MCF 10A (cell line): ENCODE measurements at regions of chr5 and their contacts with region 1.

Region 1: GRCh38 chr5:139312075-139312474 is 18.5 kb downstream of the MATR3 start:
- DNase-seq: no peak
- H3K4me3 Mint-ChIP-seq: no peak overlapping the region
- H3K27ac Mint-ChIP-seq: peak overlapping the region; percentile 12
- H3K4me1 Mint-ChIP-seq: peaks cover 42% of the 10 kb centered on the region
- H3K27me3 Mint-ChIP-seq: no peaks in the 10 kb centered on the region
- CTCF ChIP-seq: no peak

Region 2: GRCh38 chr5:139038613-139039305 is 273.3 kb before region 1 on chr5:
- CTCF ChIA-PET with region 1: no interaction called
- POLR2A ChIA-PET with region 1: no interaction called
- intact Hi-C with region 1: no loop called
- DNase-seq: no peak
- H3K4me3 Mint-ChIP-seq: no peak overlapping the region
- H3K27ac Mint-ChIP-seq: no peak overlapping the region
- H3K4me1 Mint-ChIP-seq: no peaks in the 10 kb centered on the region
- H3K27me3 Mint-ChIP-seq: no peaks in the 10 kb centered on the region
- CTCF ChIP-seq: no peak

Region 3: GRCh38 chr5:139193928-139194327 is 118.1 kb before region 1 on chr5:
- CTCF ChIA-PET with region 1: no interaction called
- POLR2A ChIA-PET with region 1: no interaction called
- intact Hi-C with region 1: no loop called
- DNase-seq: peak; percentile 25
- H3K4me3 Mint-ChIP-seq: no peak overlapping the region
- H3K27ac Mint-ChIP-seq: no peak overlapping the region
- H3K4me1 Mint-ChIP-seq: peaks cover 17% of the 10 kb centered on the region
- H3K27me3 Mint-ChIP-seq: no peaks in the 10 kb centered on the region
- CTCF ChIP-seq: no peak

Region 4: DNA sequence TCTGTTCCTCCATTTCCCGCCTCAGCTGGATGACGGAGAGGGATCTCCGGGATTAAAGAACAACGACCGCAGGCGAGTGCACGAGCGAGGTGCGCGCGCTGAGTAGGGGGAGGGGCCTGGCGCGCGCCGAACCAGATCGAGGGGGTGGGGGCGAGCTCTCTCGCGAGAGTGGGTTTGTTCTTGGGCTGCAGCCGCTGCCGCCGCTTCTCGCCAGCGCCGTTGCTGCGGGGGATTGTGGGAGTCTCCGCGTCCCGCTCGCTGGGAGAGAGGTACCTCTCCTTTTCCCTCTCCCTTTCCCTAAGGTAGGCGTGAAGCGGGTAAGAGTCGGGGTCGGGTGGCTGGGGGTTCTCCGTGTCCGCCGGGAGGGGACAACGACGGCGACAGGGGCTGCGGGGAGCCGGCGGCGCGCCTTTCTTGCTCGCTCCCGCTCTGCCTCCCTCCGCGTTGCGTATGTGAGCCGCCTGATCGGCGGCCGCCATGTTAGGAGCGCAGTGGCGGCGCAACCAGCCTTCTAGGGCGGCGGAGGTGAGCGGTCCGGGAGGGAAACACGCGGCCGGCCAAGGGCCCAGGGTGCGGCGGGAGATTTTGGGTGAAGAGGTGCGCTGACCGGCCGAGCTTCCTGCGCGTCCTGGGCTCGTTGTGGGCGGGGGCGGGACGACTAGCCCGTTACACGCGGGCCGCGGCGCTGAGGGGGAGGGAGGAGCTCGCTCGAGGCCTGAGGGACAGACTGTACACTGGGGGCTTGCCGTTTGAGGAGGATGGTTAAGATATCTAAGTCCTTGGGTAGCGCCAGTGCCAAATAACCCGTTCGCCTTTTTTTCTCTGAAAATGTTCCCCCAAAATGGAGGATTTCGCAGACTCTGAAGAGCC is 18.3 kb before region 1 on chr5 and contains the start of gene MATR3:
- CTCF ChIA-PET with region 1: interaction called, 3 read pairs
- POLR2A ChIA-PET with region 1: interaction called, 249 read pairs
- intact Hi-C with region 1: loop called (anchors 1 kb)
- DNase-seq: peak; percentile 98
- H3K4me3 Mint-ChIP-seq: peak within 1 kb of the TSS; percentile 94
- H3K27ac Mint-ChIP-seq: peak within 1 kb of the TSS; percentile 99
- H3K4me1 Mint-ChIP-seq: peaks cover 37% of the 10 kb centered on the region
- H3K27me3 Mint-ChIP-seq: no peaks in the 10 kb centered on the region
- CTCF ChIP-seq: no peak
- total RNA-seq, gene MATR3: 152 and 159 TPM in 2 replicates

Region 5: DNA sequence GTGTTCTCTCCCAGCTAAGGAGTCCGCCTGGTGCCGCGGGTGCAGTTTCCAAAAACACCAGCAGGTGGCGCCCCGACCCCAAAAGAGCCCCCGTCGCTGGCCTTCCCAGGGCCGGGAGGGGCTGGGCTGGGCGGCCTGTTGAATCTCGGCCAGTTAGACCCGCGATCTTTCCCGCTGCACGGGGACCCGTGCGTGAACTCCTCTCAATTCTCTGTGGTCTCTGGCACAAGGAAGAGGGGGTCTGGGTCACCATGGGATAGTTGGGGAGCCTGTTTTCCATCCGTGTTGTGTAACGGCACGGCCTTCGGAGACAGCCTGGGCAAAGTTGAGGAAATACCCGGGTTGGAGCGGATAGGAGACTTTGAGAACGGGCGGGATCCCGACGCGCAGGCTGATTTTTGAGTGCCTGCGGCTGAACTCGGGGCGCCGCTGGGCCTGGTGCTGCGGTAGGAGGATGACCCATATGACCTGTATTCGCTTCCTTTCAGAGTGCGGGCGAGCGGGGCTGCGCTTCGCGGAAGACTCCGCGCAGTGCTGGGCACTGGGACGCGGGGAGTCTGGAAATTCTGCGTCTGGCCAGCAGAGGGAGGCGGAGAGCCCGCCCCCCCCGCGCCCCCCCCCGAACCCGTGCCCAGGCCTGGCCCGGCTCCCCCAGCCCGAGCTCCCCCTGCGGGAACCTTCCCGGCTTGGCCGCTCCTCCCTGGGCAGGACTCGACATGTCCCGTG is 475.7 kb after region 1 on chr5:
- CTCF ChIA-PET with region 1: no interaction called
- POLR2A ChIA-PET with region 1: no interaction called
- intact Hi-C with region 1: no loop called
- DNase-seq: peak; percentile 86
- H3K4me3 Mint-ChIP-seq: peak overlapping the region; percentile 78
- H3K27ac Mint-ChIP-seq: peak overlapping the region; percentile 47
- H3K4me1 Mint-ChIP-seq: no peaks in the 10 kb centered on the region
- H3K27me3 Mint-ChIP-seq: peaks cover 38% of the 10 kb centered on the region
- CTCF ChIP-seq: peak; percentile 100